IMR-90 (cell line): ENCODE measurements at regions of chr3 and their contacts with region 1.

Region 1: DNA sequence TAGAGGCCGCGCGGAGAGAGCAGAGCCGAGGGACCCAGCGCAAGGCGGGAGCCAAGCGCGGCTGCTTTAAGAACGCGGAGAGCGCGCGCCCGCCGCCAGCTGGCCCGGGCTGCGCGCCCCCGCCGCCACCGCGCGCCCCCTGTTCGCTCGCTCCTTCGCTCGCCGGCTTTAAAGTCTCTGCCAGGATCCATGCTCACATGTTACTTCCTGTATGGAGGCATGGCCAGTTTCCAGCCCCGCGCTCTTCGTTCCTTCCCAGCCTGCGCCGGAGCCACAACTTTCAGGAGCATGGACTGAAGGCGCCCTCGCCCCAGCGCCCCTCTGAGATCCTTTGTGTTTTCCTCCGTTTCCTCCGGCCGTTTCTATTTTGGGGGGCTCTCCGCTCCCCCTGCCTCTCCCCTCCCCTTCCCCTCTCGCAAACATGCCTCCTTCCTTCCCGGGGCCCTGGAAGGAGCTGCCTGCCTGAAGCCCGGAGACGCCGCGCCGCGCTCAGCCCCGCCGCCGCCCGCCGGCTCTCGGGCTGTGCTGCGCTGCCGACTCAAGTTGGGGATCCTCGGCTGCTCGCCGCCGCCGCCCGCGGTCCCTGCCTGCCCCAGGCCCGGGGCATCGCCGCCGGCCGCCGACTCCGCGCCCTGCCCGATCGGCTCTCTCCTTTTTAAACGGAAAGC is at the start of gene PTPRG:
- DNase-seq: peak; percentile 94
- ATAC-seq: peak; percentile 59
- H3K4me3 ChIP-seq: peak within 1 kb of the TSS; percentile 99
- H3K27ac ChIP-seq: peak within 1 kb of the TSS; percentile 94
- H3K4me1 ChIP-seq: peaks cover 2% of the 10 kb centered on the region; the same call in 1 of the 2 replicates
- H3K27me3 ChIP-seq: no peaks in the 10 kb centered on the region
- CTCF ChIP-seq: no peak
- POLR2A ChIP-seq: peak; percentile 73; the same call in 1 of the 2 replicates
- RAD21 ChIP-seq: no peak
- total RNA-seq, gene PTPRG: 24.7 and 31.0 TPM in 2 replicates

Region 2: DNA sequence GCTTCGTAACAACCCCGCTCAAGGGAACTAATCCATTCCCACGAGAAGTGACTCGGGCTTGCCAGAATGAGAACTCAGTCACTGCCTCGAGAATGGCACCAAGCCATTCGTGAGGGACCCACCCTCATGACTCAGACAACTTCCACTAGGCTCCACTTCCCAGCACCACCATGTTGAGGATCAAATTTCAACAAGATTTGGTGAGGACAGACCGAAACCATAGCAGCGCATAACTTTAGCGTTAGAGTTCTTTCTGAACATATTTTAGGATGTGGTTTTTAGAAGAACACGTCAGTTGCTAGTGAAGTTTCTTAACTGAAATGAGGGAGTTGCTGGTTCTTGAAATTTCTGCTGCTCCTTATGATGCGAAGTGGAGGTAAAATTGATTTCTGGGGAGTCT is 13.3 kb after region 1 on chr3:
- CTCF ChIA-PET with region 1: interaction called, 11 read pairs
- POLR2A ChIA-PET with region 1: no interaction called
- dilution Hi-C with region 1: no loop called
- in situ Hi-C with region 1: no loop called
- intact Hi-C with region 1: no loop called
- DNase-seq: peak; percentile 97
- ATAC-seq: peak; percentile 84
- H3K4me3 ChIP-seq: peak overlapping the region; percentile 8; the same call in 1 of the 2 replicates
- H3K27ac ChIP-seq: peak overlapping the region; percentile 64; the same call in 1 of the 2 replicates
- H3K4me1 ChIP-seq: peaks cover 9% of the 10 kb centered on the region; the same call in 1 of the 2 replicates
- H3K27me3 ChIP-seq: no peaks in the 10 kb centered on the region
- CTCF ChIP-seq: no peak
- POLR2A ChIP-seq: no peak
- RAD21 ChIP-seq: no peak

Region 3: DNA sequence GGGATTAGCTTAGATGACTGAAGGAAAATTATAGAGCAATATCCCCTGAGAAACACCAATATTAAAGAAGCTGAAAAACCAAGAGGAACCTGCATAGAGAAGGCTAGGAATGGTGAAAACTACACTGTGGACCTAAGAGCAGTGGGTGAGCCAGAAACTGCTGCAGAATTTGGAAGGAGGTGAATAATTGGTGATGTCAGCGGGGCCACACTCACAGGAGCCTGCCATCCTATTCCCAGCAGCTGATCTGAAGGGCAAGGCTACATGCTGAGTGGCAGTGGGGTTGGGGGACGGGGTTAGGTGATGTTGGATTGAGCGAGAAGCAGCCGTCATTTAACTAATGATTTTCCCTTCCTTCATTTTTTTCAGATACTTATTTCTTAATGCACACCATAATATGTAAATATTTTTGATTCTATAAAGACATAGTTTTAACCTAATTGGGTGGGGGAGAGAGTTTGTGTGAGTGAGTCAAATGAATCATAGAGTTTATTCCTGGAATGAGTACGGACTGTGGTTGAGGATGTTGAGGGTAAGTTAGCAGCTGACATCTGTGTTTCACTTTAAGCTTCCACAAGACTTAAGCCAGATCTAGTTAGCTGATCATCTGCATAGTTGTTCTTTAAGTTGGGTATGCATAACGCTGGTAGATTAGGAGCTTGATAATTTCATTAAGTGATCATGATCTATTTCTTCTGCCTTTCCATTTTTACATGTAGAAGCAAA is 222.6 kb after region 1 on chr3:
- CTCF ChIA-PET with region 1: interaction called, 3 read pairs
- POLR2A ChIA-PET with region 1: no interaction called
- dilution Hi-C with region 1: no loop called
- in situ Hi-C with region 1: no loop called
- intact Hi-C with region 1: loop called (anchors 10 kb)
- DNase-seq: peak; percentile 88
- ATAC-seq: peak; percentile 96
- H3K4me3 ChIP-seq: no peak overlapping the region
- H3K27ac ChIP-seq: peak overlapping the region; percentile 61; the same call in 1 of the 2 replicates
- H3K4me1 ChIP-seq: peaks cover 8% of the 10 kb centered on the region
- H3K27me3 ChIP-seq: no peaks in the 10 kb centered on the region
- CTCF ChIP-seq: no peak
- POLR2A ChIP-seq: no peak
- RAD21 ChIP-seq: no peak

Region 4: DNA sequence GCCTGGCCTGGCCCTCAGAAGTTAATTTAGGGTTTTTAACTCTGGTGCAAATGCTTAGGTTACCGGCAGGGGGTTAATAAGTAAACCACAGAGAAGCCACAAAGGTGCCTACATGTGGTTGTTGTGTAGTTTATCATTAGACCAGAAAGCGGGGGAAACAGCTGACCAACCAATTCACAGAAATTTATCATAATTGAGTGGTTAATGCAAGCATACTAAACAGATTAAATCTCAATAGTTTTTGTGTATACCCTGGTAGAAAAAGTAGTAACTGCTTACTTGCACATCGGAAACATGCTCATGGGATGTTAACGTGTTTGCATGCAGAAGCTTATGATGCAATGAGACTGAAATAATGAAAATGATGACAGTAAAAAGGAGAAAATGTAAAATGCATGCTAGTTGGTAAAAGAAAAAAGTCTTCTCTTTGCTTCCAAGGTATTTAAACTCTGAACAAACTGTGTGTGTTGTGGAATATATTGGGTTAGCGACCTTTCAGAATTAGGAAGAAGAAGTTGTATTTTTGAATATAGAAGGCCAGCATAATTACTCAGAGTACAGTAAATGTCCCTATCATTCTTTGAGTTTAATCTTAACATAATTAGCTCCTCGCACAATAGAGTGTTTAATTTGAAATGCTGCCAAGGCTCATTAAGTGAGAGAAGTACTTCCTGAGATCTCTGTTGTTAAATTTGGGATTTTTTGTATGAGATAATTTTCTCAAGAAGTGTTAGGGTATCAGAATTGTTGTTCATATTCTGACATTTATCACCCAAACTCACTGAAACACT is 316.0 kb after region 1 on chr3:
- CTCF ChIA-PET with region 1: no interaction called
- POLR2A ChIA-PET with region 1: no interaction called
- dilution Hi-C with region 1: no loop called
- in situ Hi-C with region 1: no loop called
- intact Hi-C with region 1: loop called (anchors 5 kb)
- DNase-seq: no peak
- ATAC-seq: no peak
- H3K4me3 ChIP-seq: no peak overlapping the region
- H3K27ac ChIP-seq: peak overlapping the region; percentile 53; the same call in 1 of the 2 replicates
- H3K4me1 ChIP-seq: peaks cover 25% of the 10 kb centered on the region
- H3K27me3 ChIP-seq: no peaks in the 10 kb centered on the region
- CTCF ChIP-seq: no peak
- POLR2A ChIP-seq: no peak
- RAD21 ChIP-seq: no peak

Region 5: GRCh38 chr3:62051507-62051906 is 490.0 kb after region 1 on chr3:
- CTCF ChIA-PET with region 1: no interaction called
- POLR2A ChIA-PET with region 1: no interaction called
- dilution Hi-C with region 1: no loop called
- in situ Hi-C with region 1: no loop called
- intact Hi-C with region 1: loop called (anchors 5 kb)
- DNase-seq: peak; percentile 24
- ATAC-seq: no peak
- H3K4me3 ChIP-seq: no peak overlapping the region
- H3K27ac ChIP-seq: no peak overlapping the region
- H3K4me1 ChIP-seq: no peaks in the 10 kb centered on the region
- H3K27me3 ChIP-seq: no peaks in the 10 kb centered on the region
- CTCF ChIP-seq: peak; percentile 39
- POLR2A ChIP-seq: no peak
- RAD21 ChIP-seq: peak; percentile 42

Region 6: DNA sequence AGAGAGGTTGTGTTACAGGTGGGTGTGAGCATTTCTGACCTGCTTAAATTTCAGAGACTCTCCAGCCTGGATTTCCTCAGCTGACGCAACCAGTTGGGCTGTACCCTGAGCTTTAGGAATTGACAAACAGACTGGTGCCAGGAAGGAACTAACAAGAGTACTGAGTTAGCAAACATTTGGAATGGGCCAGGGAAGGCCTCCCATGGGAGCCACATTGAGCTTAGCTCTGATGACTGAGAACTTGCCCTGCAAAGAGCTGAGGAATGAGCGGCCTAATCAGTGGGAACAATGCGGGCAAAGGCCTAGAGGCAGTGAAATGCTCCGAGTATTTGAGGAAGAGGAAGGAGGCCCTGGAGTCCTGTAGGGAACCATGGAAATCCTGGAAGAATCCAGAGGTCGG is 557.6 kb after region 1 on chr3:
- CTCF ChIA-PET with region 1: no interaction called
- POLR2A ChIA-PET with region 1: no interaction called
- dilution Hi-C with region 1: no loop called
- in situ Hi-C with region 1: no loop called
- intact Hi-C with region 1: no loop called
- DNase-seq: no peak
- ATAC-seq: no peak
- H3K4me3 ChIP-seq: no peak overlapping the region
- H3K27ac ChIP-seq: no peak overlapping the region
- H3K4me1 ChIP-seq: no peaks in the 10 kb centered on the region
- H3K27me3 ChIP-seq: no peaks in the 10 kb centered on the region
- CTCF ChIP-seq: no peak
- POLR2A ChIP-seq: no peak
- RAD21 ChIP-seq: no peak

Region 7: GRCh38 chr3:62188681-62189383 is 627.3 kb after region 1 on chr3:
- CTCF ChIA-PET with region 1: interaction called, 13 read pairs
- POLR2A ChIA-PET with region 1: no interaction called
- dilution Hi-C with region 1: no loop called
- in situ Hi-C with region 1: loop called (anchors 5 kb)
- intact Hi-C with region 1: loop called (anchors 1 kb)
- DNase-seq: peak; percentile 75
- ATAC-seq: peak; percentile 94
- H3K4me3 ChIP-seq: no peak overlapping the region
- H3K27ac ChIP-seq: no peak overlapping the region
- H3K4me1 ChIP-seq: no peaks in the 10 kb centered on the region
- H3K27me3 ChIP-seq: no peaks in the 10 kb centered on the region
- CTCF ChIP-seq: peak; percentile 81
- POLR2A ChIP-seq: no peak
- RAD21 ChIP-seq: peak; percentile 82

Region 8: DNA sequence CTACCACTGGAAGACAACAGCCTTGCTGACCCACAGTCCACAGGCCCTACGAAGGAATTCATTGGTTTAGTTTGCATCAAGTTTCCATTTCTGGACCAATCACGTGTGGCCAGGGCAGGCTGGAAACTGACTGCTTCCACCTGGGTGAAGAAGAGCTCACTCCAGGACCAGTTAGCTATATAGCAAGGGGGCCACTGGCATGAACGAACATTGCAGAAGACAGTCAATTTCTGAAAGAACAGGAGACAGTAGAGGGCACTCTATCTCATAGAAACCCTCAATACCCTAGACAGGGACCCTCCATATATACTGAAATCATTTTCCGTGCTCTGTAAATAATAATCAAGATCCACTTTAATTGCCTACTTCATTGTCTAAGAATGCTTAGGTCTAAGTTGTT is 1098.1 kb after region 1 on chr3:
- CTCF ChIA-PET with region 1: no interaction called
- POLR2A ChIA-PET with region 1: no interaction called
- dilution Hi-C with region 1: no loop called
- in situ Hi-C with region 1: no loop called
- intact Hi-C with region 1: no loop called
- DNase-seq: no peak
- ATAC-seq: no peak
- H3K4me3 ChIP-seq: no peak overlapping the region
- H3K27ac ChIP-seq: no peak overlapping the region
- H3K4me1 ChIP-seq: no peaks in the 10 kb centered on the region
- H3K27me3 ChIP-seq: no peaks in the 10 kb centered on the region
- CTCF ChIP-seq: no peak
- POLR2A ChIP-seq: no peak
- RAD21 ChIP-seq: no peak